Calu3 (cell line): ENCODE measurements at regions of chr2 and their contacts with region 1.

Region 1: DNA sequence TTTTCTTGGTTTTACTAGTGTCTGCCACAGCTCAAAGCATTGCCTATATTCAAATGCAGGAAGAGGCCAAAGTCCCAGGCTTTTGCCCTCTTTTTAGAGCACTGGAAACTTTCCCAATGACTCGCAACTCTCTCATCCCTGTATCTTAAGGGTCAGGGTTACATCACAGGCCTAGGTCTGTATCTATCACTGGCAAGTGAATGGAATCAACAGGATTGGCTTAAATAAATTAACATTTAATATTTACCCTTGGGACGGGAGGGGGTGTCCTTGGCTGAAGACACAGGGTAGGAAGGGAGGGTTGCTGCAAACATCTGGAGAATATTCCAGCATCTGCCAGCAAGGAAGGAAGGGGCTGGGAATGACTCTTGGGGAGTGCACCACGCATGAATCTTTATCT is 242.6 kb downstream of the SLC4A3 start:
- DNase-seq: no peak
- H3K4me3 Mint-ChIP-seq: no peak overlapping the region
- H3K27ac Mint-ChIP-seq: no peak overlapping the region
- H3K4me1 Mint-ChIP-seq: no peaks in the 10 kb centered on the region
- H3K27me3 Mint-ChIP-seq: no peaks in the 10 kb centered on the region
- CTCF ChIP-seq: no peak

Region 2: GRCh38 chr2:219829667-219830352 is 40.2 kb before region 1 on chr2:
- CTCF ChIA-PET with region 1: no interaction called
- intact Hi-C with region 1: no loop called
- DNase-seq: no peak
- H3K4me3 Mint-ChIP-seq: no peak overlapping the region
- H3K27ac Mint-ChIP-seq: no peak overlapping the region
- H3K4me1 Mint-ChIP-seq: no peaks in the 10 kb centered on the region
- H3K27me3 Mint-ChIP-seq: peaks cover 17% of the 10 kb centered on the region
- CTCF ChIP-seq: no peak

Region 3: DNA sequence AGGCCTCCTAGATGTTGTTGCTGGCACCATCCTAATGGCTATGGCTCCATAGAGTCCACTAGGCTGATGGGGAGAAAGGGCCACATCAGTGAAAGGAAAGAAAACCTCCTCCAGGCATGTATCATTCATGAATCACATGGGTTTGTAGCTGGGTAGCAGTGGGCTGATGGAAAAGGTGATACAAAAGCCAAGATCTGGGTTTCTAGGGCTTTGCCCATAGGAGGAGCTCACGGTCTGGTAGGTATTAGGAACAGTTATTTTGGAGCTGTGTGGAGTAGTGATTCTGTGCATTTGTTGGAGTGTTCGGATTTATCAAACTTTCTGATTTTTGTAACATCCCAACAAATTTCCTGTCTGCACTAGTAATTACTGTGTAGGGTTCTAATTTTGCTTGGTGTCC is 16.6 kb after region 1 on chr2:
- CTCF ChIA-PET with region 1: interaction called, 13 read pairs
- intact Hi-C with region 1: no loop called
- DNase-seq: no peak
- H3K4me3 Mint-ChIP-seq: no peak overlapping the region
- H3K27ac Mint-ChIP-seq: no peak overlapping the region
- H3K4me1 Mint-ChIP-seq: no peaks in the 10 kb centered on the region
- H3K27me3 Mint-ChIP-seq: no peaks in the 10 kb centered on the region
- CTCF ChIP-seq: no peak